ENCODE measurements at regions of chr1 and their contacts with region 1.

Region 1: GRCh38 chr1:203480525-203481084 is 5.0 kb downstream of the PRELP start:
- DNase-seq: peak; percentile 94
- H3K4me3 ChIP-seq: peak overlapping the region; percentile 51 to 69 (median 65)
- H3K27ac ChIP-seq: peak overlapping the region; percentile 88 to 94 (median 92)
- H3K4me1 ChIP-seq: peaks cover 22 to 88% (median 85%) of the 10 kb centered on the region in 4 donors
- H3K27me3 ChIP-seq: no peaks in the 10 kb centered on the region
- CTCF ChIP-seq: no peak
- EP300 ChIP-seq: no peak
- POLR2A ChIP-seq: no peak

Region 2: GRCh38 chr1:203378556-203379245 is 101.9 kb before region 1 on chr1:
- intact Hi-C with region 1: loop called (anchors 10 kb)
- DNase-seq: peak; percentile 81
- H3K4me3 ChIP-seq: no peak overlapping the region
- H3K27ac ChIP-seq: peak overlapping the region in 2 of 4 donors; percentile 58 to 65
- H3K4me1 ChIP-seq: peaks cover 34 to 58% (median 50%) of the 10 kb centered on the region in 4 donors
- H3K27me3 ChIP-seq: no peaks in the 10 kb centered on the region
- CTCF ChIP-seq: no peak
- EP300 ChIP-seq: no peak
- POLR2A ChIP-seq: no peak

Region 3: GRCh38 chr1:203408486-203409427 is 71.8 kb before region 1 on chr1:
- intact Hi-C with region 1: loop called (anchors 10 kb)
- DNase-seq: peak; percentile 57
- H3K4me3 ChIP-seq: peak overlapping the region in 1 of 4 donors; percentile 0
- H3K27ac ChIP-seq: peak overlapping the region; percentile 76 to 85 (median 84)
- H3K4me1 ChIP-seq: peaks cover 30 to 67% (median 60%) of the 10 kb centered on the region in 4 donors
- H3K27me3 ChIP-seq: no peaks in the 10 kb centered on the region
- CTCF ChIP-seq: no peak
- EP300 ChIP-seq: no peak
- POLR2A ChIP-seq: no peak